Activated T-helper 2 cell treated with anti-CD3 and anti-CD28 coated beads, Interferon-gamma antibody, Interleukin-2, Interleukin-4, amounts not matched to agents 10 μg/mL and 5 μg/mL and 100 μg/mL, durations not matched to agents 14 hours and 24 hours and 36 hours (primary cell): ENCODE measurements at regions of chr1 and their contacts with region 1.

Region 1: GRCh38 chr1:222713091-222713961 is 962 bp downstream of the BROX start:
- DNase-seq: peak; percentile 81
- H3K4me3 Mint-ChIP-seq: peak overlapping the region; percentile 99
- H3K27ac Mint-ChIP-seq: peak overlapping the region; percentile 97
- H3K4me1 Mint-ChIP-seq: peaks cover 30% of the 10 kb centered on the region
- H3K27me3 Mint-ChIP-seq: no peaks in the 10 kb centered on the region

Region 2: GRCh38 chr1:222589462-222590302 is 123.6 kb before region 1 on chr1 and contains the start of gene TAF1A:
- intact Hi-C with region 1: loop called (anchors 1 kb)
- DNase-seq: peak; percentile 79
- H3K4me3 Mint-ChIP-seq: peak within 1 kb of the TSS; percentile 96
- H3K27ac Mint-ChIP-seq: peak within 1 kb of the TSS; percentile 93
- H3K4me1 Mint-ChIP-seq: peaks cover 27% of the 10 kb centered on the region
- H3K27me3 Mint-ChIP-seq: no peaks in the 10 kb centered on the region
- total RNA-seq, gene TAF1A: 17.6 and 17.9 TPM in 2 replicates

Region 3: GRCh38 chr1:222643938-222644635 is 69.2 kb before region 1 on chr1:
- intact Hi-C with region 1: loop called (anchors 1 kb)
- DNase-seq: peak; percentile 97
- H3K4me3 Mint-ChIP-seq: peak overlapping the region; percentile 99
- H3K27ac Mint-ChIP-seq: peak overlapping the region; percentile 94
- H3K4me1 Mint-ChIP-seq: peaks cover 18% of the 10 kb centered on the region
- H3K27me3 Mint-ChIP-seq: no peaks in the 10 kb centered on the region

Region 4: GRCh38 chr1:222897527-222898190 is 184.3 kb after region 1 on chr1:
- intact Hi-C with region 1: loop called (anchors 5 kb)
- DNase-seq: no peak
- H3K4me3 Mint-ChIP-seq: peak overlapping the region; percentile 4
- H3K27ac Mint-ChIP-seq: peak overlapping the region; percentile 77
- H3K4me1 Mint-ChIP-seq: peaks cover 12% of the 10 kb centered on the region
- H3K27me3 Mint-ChIP-seq: no peaks in the 10 kb centered on the region